ENCODE measurements at regions of chr6 and their contacts with region 1.

Region 1: GRCh38 chr6:20534295-20535262 is at the start of gene CDKAL1:
- DNase-seq: peak; percentile 42
- H3K4me3 ChIP-seq: peak within 1 kb of the TSS; percentile 61 to 90 (median 78)
- H3K27ac ChIP-seq: peak within 1 kb of the TSS; percentile 85 to 91 (median 88)
- H3K4me1 ChIP-seq: peaks cover 9 to 21% (median 11%) of the 10 kb centered on the region in 3 donors
- H3K27me3 ChIP-seq: no peaks in the 10 kb centered on the region
- CTCF ChIP-seq: peak in 1 of 6 experiments; percentile 41
- POLR2A ChIP-seq: peak in 1 of 4 donors; percentile 52
- total RNA-seq, gene CDKAL1: 6.5 to 13.0 (median 10.7) TPM

Region 2: GRCh38 chr6:20092071-20092566 is 442.5 kb before region 1 on chr6:
- intact Hi-C with region 1: loop called (anchors 5 kb)
- DNase-seq: no peak
- H3K4me3 ChIP-seq: no peak overlapping the region
- H3K27ac ChIP-seq: no peak overlapping the region
- H3K4me1 ChIP-seq: no peaks in the 10 kb centered on the region
- H3K27me3 ChIP-seq: no peaks in the 10 kb centered on the region
- CTCF ChIP-seq: peak; percentile 38 to 75 (median 64)
- POLR2A ChIP-seq: no peak

Region 3: DNA sequence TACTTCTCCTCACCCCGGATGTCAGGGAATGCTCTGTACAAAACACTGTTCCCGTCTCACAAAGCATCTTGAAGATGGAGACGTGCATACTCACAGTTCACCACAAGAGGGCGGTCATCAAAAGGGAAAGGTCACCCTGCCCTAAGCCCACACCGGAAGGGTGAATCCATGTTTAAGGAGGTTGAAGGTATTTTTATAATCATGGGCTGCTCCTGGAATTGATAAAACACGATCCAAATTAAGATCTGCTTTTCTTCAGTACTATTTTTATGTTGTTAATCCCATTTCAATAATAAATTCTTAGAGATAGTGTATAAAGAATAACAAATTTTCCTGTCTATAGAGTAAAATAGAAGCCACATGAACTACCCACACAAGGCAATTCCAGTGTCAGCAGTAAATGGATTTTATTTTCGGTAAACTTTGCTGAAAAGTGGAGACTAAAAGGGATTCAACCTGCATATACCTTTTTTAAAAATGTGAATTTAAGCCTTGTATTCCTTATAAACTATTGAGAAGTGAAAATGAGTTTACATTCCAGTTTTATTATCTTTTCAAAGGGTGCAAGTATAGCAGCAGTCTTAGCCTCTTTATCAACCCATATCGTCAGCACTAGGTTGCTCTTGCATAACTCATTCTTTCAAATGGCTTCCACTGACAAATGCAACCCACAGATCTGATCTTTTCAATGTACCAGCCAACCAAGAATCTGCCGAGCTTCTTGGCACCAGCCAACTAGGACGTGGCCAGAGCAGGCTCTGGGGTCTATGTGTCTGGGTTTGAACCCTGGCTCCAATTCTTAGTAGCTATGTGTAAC is 242.6 kb before region 1 on chr6:
- intact Hi-C with region 1: loop called (anchors 2 kb)
- DNase-seq: no peak
- H3K4me3 ChIP-seq: no peak overlapping the region
- H3K27ac ChIP-seq: no peak overlapping the region
- H3K4me1 ChIP-seq: peaks cover 0 to 7% (median 0%) of the 10 kb centered on the region in 3 donors
- H3K27me3 ChIP-seq: no peaks in the 10 kb centered on the region
- CTCF ChIP-seq: peak; percentile 84 to 93 (median 88)
- POLR2A ChIP-seq: no peak

Region 4: DNA sequence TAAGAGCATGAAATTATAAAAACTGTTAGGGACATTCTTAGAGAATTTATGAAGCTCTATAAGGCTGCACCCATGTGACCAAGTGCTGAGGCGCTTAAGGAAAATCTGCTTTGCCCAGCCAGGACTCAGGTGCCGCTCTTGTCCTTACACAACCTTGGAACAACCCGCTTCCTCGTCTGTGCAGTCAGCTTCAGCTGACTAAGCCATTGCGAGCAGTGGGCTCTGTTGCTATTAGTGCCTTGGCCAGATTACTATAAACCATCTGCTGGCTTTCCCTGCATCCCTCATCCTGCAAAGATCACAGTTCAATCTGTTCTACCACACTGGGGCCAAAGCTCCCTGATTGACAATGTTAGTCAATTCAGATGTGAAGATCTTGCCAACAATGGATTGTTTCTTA is 222.0 kb before region 1 on chr6:
- intact Hi-C with region 1: no loop called
- DNase-seq: no peak
- H3K4me3 ChIP-seq: no peak overlapping the region
- H3K27ac ChIP-seq: no peak overlapping the region
- H3K4me1 ChIP-seq: no peaks in the 10 kb centered on the region
- H3K27me3 ChIP-seq: no peaks in the 10 kb centered on the region
- CTCF ChIP-seq: no peak
- POLR2A ChIP-seq: no peak

Region 5: GRCh38 chr6:20401205-20402091 is 133.1 kb before region 1 on chr6 and contains the start of gene E2F3:
- intact Hi-C with region 1: loop called (anchors 5 kb)
- DNase-seq: peak; percentile 99
- H3K4me3 ChIP-seq: peak within 1 kb of the TSS; percentile 71 to 93 (median 86)
- H3K27ac ChIP-seq: peak within 1 kb of the TSS; percentile 93 to 95 (median 94)
- H3K4me1 ChIP-seq: peaks cover 0 to 29% (median 0%) of the 10 kb centered on the region in 3 donors
- H3K27me3 ChIP-seq: no peaks in the 10 kb centered on the region
- CTCF ChIP-seq: no peak
- POLR2A ChIP-seq: peak in 3 of 4 donors; percentile 43 to 63 (median 43)
- total RNA-seq, gene E2F3: 5.4 to 7.1 (median 6.1) TPM